Activated CD4-positive, alpha-beta memory T cell treated with anti-CD3 and anti-CD28 coated beads for 36 hours (primary cell): ENCODE measurements at regions of chr19 and their contacts with region 1.

Region 1: GRCh38 chr19:6034512-6034911 is 56.6 kb upstream of the RANBP3 start:
- DNase-seq: no peak
- H3K4me3 Mint-ChIP-seq: no peak overlapping the region
- H3K27ac Mint-ChIP-seq: no peak overlapping the region
- H3K4me1 Mint-ChIP-seq: peaks cover 25% of the 10 kb centered on the region
- H3K27me3 Mint-ChIP-seq: no peaks in the 10 kb centered on the region

Region 2: DNA sequence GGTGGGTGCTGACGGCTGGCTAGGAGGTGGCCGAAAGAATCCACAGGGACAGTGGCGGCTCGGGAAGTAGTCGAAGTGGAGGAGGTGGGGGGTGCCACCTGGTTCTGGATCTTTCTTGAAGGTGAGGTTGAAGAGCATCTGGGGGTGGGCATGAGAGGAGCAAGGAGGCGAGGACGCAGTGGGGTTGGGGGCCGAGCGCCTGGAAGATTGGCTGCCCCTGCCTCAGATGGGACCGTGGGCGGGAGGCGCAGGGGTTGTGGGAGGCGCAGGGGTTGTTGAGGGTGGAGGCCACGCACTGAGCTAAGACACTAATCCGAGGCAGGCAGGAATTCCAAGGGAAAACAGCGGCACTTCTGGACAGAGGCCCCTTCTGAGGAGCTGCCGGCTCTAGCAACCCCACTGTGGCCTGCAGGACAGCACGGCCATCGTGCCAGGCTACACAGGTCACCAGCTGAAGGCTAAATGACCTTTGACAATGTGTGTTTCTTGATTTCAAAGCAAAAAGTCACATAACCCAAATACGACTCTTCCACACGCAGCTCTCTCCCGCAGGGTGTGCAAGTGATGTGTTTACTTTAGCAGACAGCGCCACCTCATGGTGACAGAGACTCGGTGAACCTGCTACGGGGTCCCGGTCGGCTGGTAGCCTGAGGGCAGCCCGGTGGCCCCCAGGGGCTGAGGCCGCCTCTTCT is 12.5 kb before region 1 on chr19:
- CTCF ChIA-PET with region 1: interaction called, 13 read pairs
- POLR2A ChIA-PET with region 1: no interaction called
- intact Hi-C with region 1: no loop called
- DNase-seq: peak; percentile 86
- H3K4me3 Mint-ChIP-seq: no peak overlapping the region
- H3K27ac Mint-ChIP-seq: no peak overlapping the region
- H3K4me1 Mint-ChIP-seq: no peaks in the 10 kb centered on the region
- H3K27me3 Mint-ChIP-seq: peaks cover 8% of the 10 kb centered on the region

Region 3: DNA sequence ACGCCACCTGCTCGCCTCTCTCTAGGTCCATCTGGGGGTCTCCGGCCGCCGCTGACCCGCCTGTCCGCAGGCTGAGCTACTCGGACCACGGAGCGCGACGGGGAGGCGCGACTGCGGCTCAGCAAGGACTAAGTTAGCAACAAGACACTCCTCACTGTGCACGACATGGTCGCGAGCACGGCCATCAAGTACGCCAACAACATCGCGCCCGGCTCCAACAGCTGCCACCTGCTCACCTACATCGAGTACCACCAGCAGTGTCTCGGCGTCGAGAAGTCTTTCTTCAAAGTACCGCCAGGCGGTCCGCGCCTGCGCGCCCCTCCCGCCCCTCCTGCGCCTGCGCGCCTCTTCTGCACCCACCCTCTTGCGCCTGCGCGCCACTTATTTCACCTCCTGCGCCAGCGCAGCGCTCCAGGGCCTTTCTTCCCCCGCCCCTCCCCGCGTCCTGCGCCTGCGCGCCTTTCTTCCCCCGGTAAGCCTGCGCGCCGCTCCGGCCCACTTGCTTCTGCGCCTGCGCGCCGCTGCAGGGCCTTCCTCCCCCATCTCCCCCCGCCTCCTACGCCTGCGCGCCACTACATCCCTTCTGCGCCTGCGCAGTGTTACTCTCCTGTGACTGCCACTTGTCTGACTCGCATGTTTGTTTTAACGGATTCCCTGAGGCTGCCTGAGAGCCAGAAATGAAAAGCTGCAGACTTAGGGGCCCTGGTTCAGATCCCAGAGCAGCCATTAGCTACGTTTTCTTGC is 164.9 kb after region 1 on chr19:
- CTCF ChIA-PET with region 1: no interaction called
- POLR2A ChIA-PET with region 1: no interaction called
- intact Hi-C with region 1: no loop called
- DNase-seq: peak; percentile 100
- H3K4me3 Mint-ChIP-seq: peak overlapping the region; percentile 98
- H3K27ac Mint-ChIP-seq: peak overlapping the region; percentile 84
- H3K4me1 Mint-ChIP-seq: peaks cover 13% of the 10 kb centered on the region
- H3K27me3 Mint-ChIP-seq: peaks cover 1% of the 10 kb centered on the region